K562 (cell line): ENCODE measurements at regions of chr12 and their contacts with region 1.

Region 1: GRCh38 chr12:3073438-3074250 is 3.5 kb upstream of the TSPAN9 start:
- DNase-seq: peak; percentile 74 to 81 (median 76)
- ATAC-seq: peak; percentile 88
- H3K4me3 ChIP-seq: no peak overlapping the region
- H3K27ac ChIP-seq: no peak overlapping the region
- H3K4me1 ChIP-seq: peaks cover 2 to 19% of the 10 kb centered on the region in 2 experiments; a peak in 3 of 5 replicates
- H3K27me3 ChIP-seq: peaks cover 9 to 10% of the 10 kb centered on the region in 2 experiments
- CTCF ChIP-seq: peak; percentile 85 to 92 (median 90)
- EP300 ChIP-seq: no peak
- POLR2A ChIP-seq: no peak
- RAD21 ChIP-seq: peak; percentile 45 to 73

Region 2: GRCh38 chr12:3202734-3203446 is 129.2 kb after region 1 on chr12:
- CTCF ChIA-PET with region 1: no interaction called
- POLR2A ChIA-PET with region 1: no interaction called
- in situ Hi-C with region 1: no loop called
- intact Hi-C with region 1: loop called (anchors 2 kb)
- DNase-seq: peak; percentile 49 to 78 (median 75)
- ATAC-seq: peak; percentile 83
- H3K4me3 ChIP-seq: no peak overlapping the region
- H3K27ac ChIP-seq: no peak overlapping the region
- H3K4me1 ChIP-seq: peaks cover 0 to 5% of the 10 kb centered on the region in 2 experiments; a peak in 1 of 5 replicates
- H3K27me3 ChIP-seq: peaks cover 0 to 12% of the 10 kb centered on the region in 2 experiments; a peak in 1 of 5 replicates
- CTCF ChIP-seq: peak; percentile 63 to 84 (median 69)
- EP300 ChIP-seq: no peak
- POLR2A ChIP-seq: no peak
- RAD21 ChIP-seq: peak; percentile 22 to 45; a peak in 3 of 4 replicates